ENCODE measurements at regions of chr2 and their contacts with region 1.

Region 1: DNA sequence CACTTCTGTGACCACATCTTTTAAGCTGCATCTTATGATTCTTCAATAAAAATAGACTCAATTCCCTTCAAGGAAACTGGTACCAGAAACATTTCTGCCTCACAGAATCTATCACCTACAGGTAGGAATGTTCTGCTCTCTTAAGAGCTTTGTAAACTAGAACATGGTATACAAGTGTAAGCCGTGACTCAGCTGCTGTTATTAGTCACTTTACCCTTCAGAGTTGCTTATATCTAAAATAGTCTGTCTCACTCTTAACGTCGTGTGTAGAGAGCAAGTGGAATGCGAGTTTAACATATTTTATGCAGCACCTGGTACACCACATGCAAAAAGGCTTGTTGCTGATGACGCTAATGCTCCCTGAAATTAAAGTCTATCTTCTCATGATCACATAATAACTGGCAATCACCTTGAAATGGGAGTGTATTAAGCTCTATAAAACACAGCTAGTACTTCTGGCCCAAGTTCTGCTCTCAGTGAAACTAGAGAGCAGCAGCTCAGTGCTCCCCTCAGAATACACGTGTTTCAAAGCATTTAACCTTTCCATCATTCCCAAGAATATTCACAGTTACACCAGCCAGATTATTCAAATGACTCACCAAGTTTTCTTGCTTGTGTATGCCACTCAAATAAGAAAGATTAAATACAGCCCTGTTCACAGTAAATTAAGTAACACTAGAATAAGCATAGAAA is 420.0 kb downstream of the ZEB2 start:
- DNase-seq: no peak
- ATAC-seq: no peak
- H3K4me3 Mint-ChIP-seq: no peak overlapping the region
- H3K27ac Mint-ChIP-seq: no peak overlapping the region
- H3K4me1 Mint-ChIP-seq: peaks cover 5% of the 10 kb centered on the region
- H3K27me3 Mint-ChIP-seq: no peaks in the 10 kb centered on the region
- CTCF ChIP-seq: no peak

Region 2: DNA sequence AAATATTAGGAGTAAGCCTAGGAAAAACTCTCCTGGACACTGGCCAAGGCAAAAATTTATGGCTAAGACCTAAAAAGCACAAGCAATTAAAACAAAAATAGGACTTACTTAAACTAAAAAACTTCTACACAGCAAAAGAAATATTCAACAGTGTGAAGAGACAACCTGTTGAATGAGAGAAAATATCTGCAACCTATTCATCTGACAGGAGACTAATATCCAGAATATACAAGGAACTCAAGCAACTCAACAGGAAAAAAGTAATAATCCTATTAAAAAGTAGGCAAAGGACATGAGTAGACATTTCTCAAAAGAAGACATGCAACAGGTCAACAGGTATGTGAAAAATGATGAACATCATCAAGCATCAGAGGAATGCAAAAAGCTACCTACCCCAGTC is 11.0 kb before region 1 on chr2:
- CTCF ChIA-PET with region 1: no interaction called
- POLR2A ChIA-PET with region 1: no interaction called
- intact Hi-C with region 1: loop called (anchors 1 kb)
- DNase-seq: no peak
- ATAC-seq: no peak
- H3K4me3 Mint-ChIP-seq: no peak overlapping the region
- H3K27ac Mint-ChIP-seq: no peak overlapping the region
- H3K4me1 Mint-ChIP-seq: peaks cover 4% of the 10 kb centered on the region
- H3K27me3 Mint-ChIP-seq: no peaks in the 10 kb centered on the region
- CTCF ChIP-seq: no peak

Region 3: GRCh38 chr2:144146076-144146475 is 46.2 kb after region 1 on chr2:
- CTCF ChIA-PET with region 1: no interaction called
- POLR2A ChIA-PET with region 1: interaction called, 11 read pairs
- intact Hi-C with region 1: no loop called
- DNase-seq: no peak
- ATAC-seq: no peak
- H3K4me3 Mint-ChIP-seq: no peak overlapping the region
- H3K27ac Mint-ChIP-seq: no peak overlapping the region
- H3K4me1 Mint-ChIP-seq: peaks cover 7% of the 10 kb centered on the region
- H3K27me3 Mint-ChIP-seq: no peaks in the 10 kb centered on the region
- CTCF ChIP-seq: no peak